Vagina (tissue), 2 donors: ENCODE measurements at regions of chr2 and their contacts with region 1.

Region 1: DNA sequence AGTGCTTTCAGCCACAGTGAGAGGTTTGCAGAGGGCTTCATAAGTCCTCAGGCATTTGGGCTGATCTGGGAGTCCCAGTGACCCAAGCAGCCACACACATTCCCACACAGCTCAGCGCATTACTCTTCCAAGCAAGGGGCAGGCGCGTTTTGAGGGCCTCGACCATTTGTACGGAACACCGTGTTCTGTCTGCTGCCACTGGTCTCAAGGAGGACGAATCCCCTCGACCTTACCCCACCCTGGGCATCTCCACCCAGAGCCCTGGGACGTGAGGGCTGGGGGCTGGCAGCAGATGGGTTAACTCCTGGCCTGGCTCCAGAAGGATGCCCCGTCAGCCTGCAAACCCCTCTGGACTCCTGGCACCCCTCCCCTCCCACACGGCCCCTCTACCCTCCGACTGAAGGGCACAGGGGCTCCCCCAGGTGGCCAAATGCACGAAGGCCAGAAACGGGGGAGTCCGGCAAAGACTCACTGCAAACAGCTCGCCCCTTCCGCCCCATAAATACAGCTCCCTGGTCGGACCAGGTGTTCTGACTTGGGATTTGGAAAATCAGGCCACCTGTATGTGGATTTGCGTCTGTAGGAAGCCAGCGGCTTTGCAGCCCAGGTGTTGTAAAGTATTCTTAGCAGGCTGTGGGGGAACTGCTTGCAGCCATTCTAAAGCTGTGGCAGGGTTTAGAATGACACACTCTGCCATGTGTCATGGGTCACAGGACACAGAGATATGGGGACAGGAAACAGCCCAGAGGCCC is 33.6 kb upstream of the PTMA start:
- DNase-seq: peak in 1 of 2 donors; percentile 88
- H3K4me3 ChIP-seq: no peak overlapping the region
- H3K27ac ChIP-seq: peak overlapping the region; percentile 81
- H3K4me1 ChIP-seq: peaks cover 50% of the 10 kb centered on the region
- H3K27me3 ChIP-seq: no peaks in the 10 kb centered on the region
- CTCF ChIP-seq: peak; percentile 66 to 82 (median 82)
- POLR2A ChIP-seq: no peak

Region 2: DNA sequence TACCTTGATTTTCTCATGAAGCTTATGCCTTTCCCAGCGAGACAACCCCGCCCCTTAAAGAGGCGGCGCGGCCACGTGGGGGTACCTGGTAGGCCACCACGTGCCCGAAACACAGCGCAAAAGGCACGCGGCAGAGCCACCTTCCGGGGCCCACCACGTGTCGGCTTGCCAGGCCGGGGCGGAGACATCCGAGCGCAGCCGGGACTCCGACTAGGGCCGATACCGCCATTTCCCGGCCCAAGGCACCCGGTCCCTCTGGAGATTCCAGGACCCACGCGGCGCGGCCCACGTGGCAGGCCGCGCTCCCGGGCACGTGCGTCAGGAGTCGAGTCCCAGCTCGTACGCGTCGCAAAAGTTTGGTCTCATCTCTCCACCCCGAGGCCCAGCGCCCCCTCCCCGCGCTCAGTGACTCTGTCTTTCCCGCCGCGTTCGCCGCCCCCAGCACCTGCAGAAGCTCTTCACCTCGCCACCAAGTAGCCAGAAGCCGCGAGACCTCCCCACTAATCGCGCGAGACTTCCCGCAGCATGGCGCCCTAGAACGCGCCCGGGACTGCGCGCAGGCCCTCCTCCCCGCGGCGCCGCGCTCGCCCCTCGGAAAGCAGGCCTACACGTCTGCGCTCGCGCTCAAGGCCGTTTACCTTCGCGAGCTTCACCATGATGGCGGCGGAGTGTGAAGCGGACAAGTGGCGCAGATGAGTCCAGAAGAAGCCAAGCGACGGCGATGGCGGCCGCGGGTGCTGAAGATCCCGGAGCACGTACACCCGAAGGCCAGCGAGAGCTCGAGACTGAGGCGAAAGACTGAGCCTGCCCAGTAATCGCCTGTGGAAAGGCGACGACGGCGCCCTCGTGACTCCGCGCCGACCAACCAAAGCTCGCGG is 210.8 kb before region 1 on chr2 and contains the start of gene NCL:
- intact Hi-C with region 1: loop called (anchors 10 kb)
- DNase-seq: no peak
- H3K4me3 ChIP-seq: peak within 1 kb of the TSS; percentile 76 to 100
- H3K27ac ChIP-seq: peak within 1 kb of the TSS; percentile 90
- H3K4me1 ChIP-seq: peaks cover 31% of the 10 kb centered on the region
- H3K27me3 ChIP-seq: no peaks in the 10 kb centered on the region
- CTCF ChIP-seq: no peak
- POLR2A ChIP-seq: peak in 1 of 2 donors; percentile 99
- total RNA-seq, gene NCL: 348 TPM

Region 3: GRCh38 chr2:231482806-231483391 is 191.9 kb before region 1 on chr2:
- intact Hi-C with region 1: no loop called
- DNase-seq: no peak
- H3K4me3 ChIP-seq: peak overlapping the region; percentile 39 to 49
- H3K27ac ChIP-seq: peak overlapping the region; percentile 76
- H3K4me1 ChIP-seq: peaks cover 7% of the 10 kb centered on the region
- H3K27me3 ChIP-seq: no peaks in the 10 kb centered on the region
- CTCF ChIP-seq: peak; percentile 45 to 82 (median 79)
- POLR2A ChIP-seq: no peak

Region 4: GRCh38 chr2:231713730-231714430 is 39.1 kb after region 1 on chr2:
- intact Hi-C with region 1: loop called (anchors 2 kb)
- DNase-seq: no peak
- H3K4me3 ChIP-seq: no peak overlapping the region
- H3K27ac ChIP-seq: peak overlapping the region; percentile 83
- H3K4me1 ChIP-seq: peaks cover 38% of the 10 kb centered on the region
- H3K27me3 ChIP-seq: no peaks in the 10 kb centered on the region
- CTCF ChIP-seq: peak; percentile 89 to 93 (median 90)
- POLR2A ChIP-seq: no peak